PC-9 (cell line): ENCODE measurements at regions of chr2 and their contacts with region 1.

Region 1: GRCh38 chr2:38274286-38275276 is 102.5 kb downstream of the ATL2 start:
- DNase-seq: peak; percentile 41 to 79
- H3K4me3 ChIP-seq: no peak overlapping the region
- H3K27ac ChIP-seq: peak overlapping the region; percentile 50; the same call in 1 of the 2 replicates
- H3K4me1 ChIP-seq: peaks cover 4% of the 10 kb centered on the region; the same call in 1 of the 2 replicates
- H3K27me3 ChIP-seq: no peaks in the 10 kb centered on the region
- CTCF ChIP-seq: peak; percentile 95

Region 2: GRCh38 chr2:37832590-37833197 is 441.9 kb before region 1 on chr2:
- CTCF ChIA-PET with region 1: no interaction called
- POLR2A ChIA-PET with region 1: no interaction called
- intact Hi-C with region 1: loop called (anchors 1 kb)
- DNase-seq: peak; percentile 67 to 84
- H3K4me3 ChIP-seq: no peak overlapping the region
- H3K27ac ChIP-seq: no peak overlapping the region
- H3K4me1 ChIP-seq: peaks cover 17% of the 10 kb centered on the region
- H3K27me3 ChIP-seq: no peaks in the 10 kb centered on the region
- CTCF ChIP-seq: peak; percentile 93

Region 3: GRCh38 chr2:37966326-37966725 is 308.3 kb before region 1 on chr2:
- CTCF ChIA-PET with region 1: interaction called, 18 read pairs
- POLR2A ChIA-PET with region 1: no interaction called
- intact Hi-C with region 1: no loop called
- DNase-seq: no peak
- H3K4me3 ChIP-seq: no peak overlapping the region
- H3K27ac ChIP-seq: no peak overlapping the region
- H3K4me1 ChIP-seq: peaks cover 11% of the 10 kb centered on the region; the same call in 1 of the 2 replicates
- H3K27me3 ChIP-seq: no peaks in the 10 kb centered on the region
- CTCF ChIP-seq: no peak

Region 4: GRCh38 chr2:38057651-38058410 is 216.8 kb before region 1 on chr2:
- CTCF ChIA-PET with region 1: interaction called, 18 read pairs
- POLR2A ChIA-PET with region 1: no interaction called
- intact Hi-C with region 1: no loop called
- DNase-seq: peak in 1 of 2 experiments; percentile 57
- H3K4me3 ChIP-seq: no peak overlapping the region
- H3K27ac ChIP-seq: peak overlapping the region; percentile 11
- H3K4me1 ChIP-seq: peaks cover 12% of the 10 kb centered on the region
- H3K27me3 ChIP-seq: no peaks in the 10 kb centered on the region
- CTCF ChIP-seq: no peak

Region 5: GRCh38 chr2:38106405-38107094 is 168.0 kb before region 1 on chr2:
- CTCF ChIA-PET with region 1: interaction called, 12 read pairs
- POLR2A ChIA-PET with region 1: no interaction called
- intact Hi-C with region 1: no loop called
- DNase-seq: peak; percentile 19 to 93
- H3K4me3 ChIP-seq: no peak overlapping the region
- H3K27ac ChIP-seq: peak overlapping the region; percentile 96
- H3K4me1 ChIP-seq: peaks cover 23% of the 10 kb centered on the region
- H3K27me3 ChIP-seq: no peaks in the 10 kb centered on the region
- CTCF ChIP-seq: no peak

Region 6: GRCh38 chr2:38146275-38146906 is 128.2 kb before region 1 on chr2:
- CTCF ChIA-PET with region 1: interaction called, 30 read pairs
- POLR2A ChIA-PET with region 1: no interaction called
- intact Hi-C with region 1: loop called (anchors 1 kb)
- DNase-seq: peak; percentile 71 to 91
- H3K4me3 ChIP-seq: peak overlapping the region; percentile 43; the same call in 1 of the 2 replicates
- H3K27ac ChIP-seq: peak overlapping the region; percentile 96
- H3K4me1 ChIP-seq: peaks cover 59% of the 10 kb centered on the region
- H3K27me3 ChIP-seq: no peaks in the 10 kb centered on the region
- CTCF ChIP-seq: no peak

Region 7: GRCh38 chr2:38344813-38345212 is 70.2 kb after region 1 on chr2:
- CTCF ChIA-PET with region 1: no interaction called
- POLR2A ChIA-PET with region 1: no interaction called
- intact Hi-C with region 1: no loop called
- DNase-seq: no peak
- H3K4me3 ChIP-seq: no peak overlapping the region
- H3K27ac ChIP-seq: no peak overlapping the region
- H3K4me1 ChIP-seq: no peaks in the 10 kb centered on the region
- H3K27me3 ChIP-seq: no peaks in the 10 kb centered on the region
- CTCF ChIP-seq: no peak